MCF 10A (cell line): ENCODE measurements at regions of chr5 and their contacts with region 1.

Region 1: GRCh38 chr5:163695830-163696578 is 190.6 kb downstream of the MAT2B start:
- DNase-seq: peak; percentile 90
- H3K4me3 Mint-ChIP-seq: no peak overlapping the region
- H3K27ac Mint-ChIP-seq: no peak overlapping the region
- H3K4me1 Mint-ChIP-seq: peaks cover 8% of the 10 kb centered on the region
- H3K27me3 Mint-ChIP-seq: no peaks in the 10 kb centered on the region
- CTCF ChIP-seq: peak; percentile 98

Region 2: GRCh38 chr5:163473635-163474243 is 222.3 kb before region 1 on chr5:
- CTCF ChIA-PET with region 1: no interaction called
- POLR2A ChIA-PET with region 1: no interaction called
- intact Hi-C with region 1: no loop called
- DNase-seq: peak; percentile 46
- H3K4me3 Mint-ChIP-seq: no peak overlapping the region
- H3K27ac Mint-ChIP-seq: no peak overlapping the region
- H3K4me1 Mint-ChIP-seq: peaks cover 13% of the 10 kb centered on the region
- H3K27me3 Mint-ChIP-seq: no peaks in the 10 kb centered on the region
- CTCF ChIP-seq: peak; percentile 42

Region 3: GRCh38 chr5:163712011-163712410 is 16.0 kb after region 1 on chr5:
- CTCF ChIA-PET with region 1: interaction called, 19 read pairs
- POLR2A ChIA-PET with region 1: no interaction called
- intact Hi-C with region 1: no loop called
- DNase-seq: peak; percentile 24
- H3K4me3 Mint-ChIP-seq: no peak overlapping the region
- H3K27ac Mint-ChIP-seq: no peak overlapping the region
- H3K4me1 Mint-ChIP-seq: peaks cover 8% of the 10 kb centered on the region
- H3K27me3 Mint-ChIP-seq: no peaks in the 10 kb centered on the region
- CTCF ChIP-seq: no peak

Region 4: GRCh38 chr5:164048359-164048926 is 352.4 kb after region 1 on chr5:
- CTCF ChIA-PET with region 1: interaction called, 10 read pairs
- POLR2A ChIA-PET with region 1: no interaction called
- intact Hi-C with region 1: loop called (anchors 1 kb)
- DNase-seq: peak; percentile 45
- H3K4me3 Mint-ChIP-seq: no peak overlapping the region
- H3K27ac Mint-ChIP-seq: no peak overlapping the region
- H3K4me1 Mint-ChIP-seq: no peaks in the 10 kb centered on the region
- H3K27me3 Mint-ChIP-seq: no peaks in the 10 kb centered on the region
- CTCF ChIP-seq: peak; percentile 61

Region 5: GRCh38 chr5:164672931-164673694 is 977.1 kb after region 1 on chr5:
- CTCF ChIA-PET with region 1: interaction called, 9 read pairs
- POLR2A ChIA-PET with region 1: no interaction called
- intact Hi-C with region 1: loop called (anchors 1 kb)
- DNase-seq: peak; percentile 42
- H3K4me3 Mint-ChIP-seq: no peak overlapping the region
- H3K27ac Mint-ChIP-seq: no peak overlapping the region
- H3K4me1 Mint-ChIP-seq: no peaks in the 10 kb centered on the region
- H3K27me3 Mint-ChIP-seq: no peaks in the 10 kb centered on the region
- CTCF ChIP-seq: peak; percentile 54